ENCODE measurements at regions of chr4 and their contacts with region 1.

Region 1: GRCh38 chr4:48141048-48141447 is 7.0 kb upstream of the TXK start:
- DNase-seq: no peak
- ATAC-seq: peak; percentile 44
- H3K4me3 Mint-ChIP-seq: no peak overlapping the region
- H3K27ac Mint-ChIP-seq: no peak overlapping the region
- H3K4me1 Mint-ChIP-seq: peaks cover 47% of the 10 kb centered on the region
- H3K27me3 Mint-ChIP-seq: no peaks in the 10 kb centered on the region

Region 2: DNA sequence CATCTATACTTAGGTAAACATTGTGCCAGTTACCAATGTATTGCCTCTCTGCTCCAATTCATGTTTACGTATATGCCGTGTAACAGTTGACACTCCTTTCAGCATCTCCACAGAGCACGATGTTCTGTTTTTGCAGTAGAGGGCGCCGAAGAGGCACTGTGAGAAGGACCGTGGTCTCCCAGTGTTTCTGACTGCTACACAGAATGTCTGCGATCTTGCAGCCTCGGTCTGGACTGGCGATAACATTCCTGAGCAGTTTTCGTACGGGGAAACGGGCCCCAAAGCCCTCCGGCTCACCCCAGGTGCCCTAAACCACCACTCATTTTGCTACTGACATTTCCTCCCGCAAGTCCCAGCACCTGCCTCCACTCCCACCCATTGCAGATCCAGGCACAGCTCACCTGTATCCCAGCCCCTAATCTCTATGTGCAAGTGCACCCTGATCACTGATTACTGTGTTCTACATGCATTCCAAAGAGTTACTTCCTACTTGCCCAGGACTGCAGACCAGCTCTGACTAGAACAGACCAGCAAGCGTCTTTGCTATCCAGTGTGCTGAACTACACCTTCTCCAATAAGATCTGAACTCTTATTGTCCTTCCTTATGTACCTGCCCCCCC is 214.3 kb before region 1 on chr4:
- CTCF ChIA-PET with region 1: interaction called, 5 read pairs
- POLR2A ChIA-PET with region 1: no interaction called
- intact Hi-C with region 1: loop called in 1 of 2 experiments (anchors 2 kb)
- DNase-seq: peak; percentile 75
- ATAC-seq: peak; percentile 100
- H3K4me3 Mint-ChIP-seq: peak overlapping the region; percentile 43
- H3K27ac Mint-ChIP-seq: no peak overlapping the region
- H3K4me1 Mint-ChIP-seq: peaks cover 4% of the 10 kb centered on the region
- H3K27me3 Mint-ChIP-seq: peaks cover 19% of the 10 kb centered on the region

Region 3: GRCh38 chr4:48002267-48002666 is 138.8 kb before region 1 on chr4:
- CTCF ChIA-PET with region 1: interaction called, 5 read pairs
- POLR2A ChIA-PET with region 1: no interaction called
- intact Hi-C with region 1: loop called in 1 of 2 experiments (anchors 2 kb)
- DNase-seq: no peak
- ATAC-seq: no peak
- H3K4me3 Mint-ChIP-seq: no peak overlapping the region
- H3K27ac Mint-ChIP-seq: no peak overlapping the region
- H3K4me1 Mint-ChIP-seq: no peaks in the 10 kb centered on the region
- H3K27me3 Mint-ChIP-seq: peaks cover 5% of the 10 kb centered on the region

Region 4: GRCh38 chr4:48109413-48110263 is 31.4 kb before region 1 on chr4:
- CTCF ChIA-PET with region 1: interaction called, 11 read pairs
- POLR2A ChIA-PET with region 1: no interaction called
- intact Hi-C with region 1: loop called (anchors 1 to 5 kb)
- DNase-seq: no peak
- ATAC-seq: peak; percentile 86
- H3K4me3 Mint-ChIP-seq: no peak overlapping the region
- H3K27ac Mint-ChIP-seq: peak overlapping the region; percentile 65
- H3K4me1 Mint-ChIP-seq: peaks cover 61% of the 10 kb centered on the region
- H3K27me3 Mint-ChIP-seq: no peaks in the 10 kb centered on the region

Region 5: GRCh38 chr4:48167538-48168263 is 26.7 kb after region 1 on chr4:
- CTCF ChIA-PET with region 1: no interaction called
- POLR2A ChIA-PET with region 1: no interaction called
- intact Hi-C with region 1: no loop called
- DNase-seq: no peak
- ATAC-seq: peak; percentile 86
- H3K4me3 Mint-ChIP-seq: no peak overlapping the region
- H3K27ac Mint-ChIP-seq: no peak overlapping the region
- H3K4me1 Mint-ChIP-seq: peaks cover 13% of the 10 kb centered on the region
- H3K27me3 Mint-ChIP-seq: no peaks in the 10 kb centered on the region

Region 6: DNA sequence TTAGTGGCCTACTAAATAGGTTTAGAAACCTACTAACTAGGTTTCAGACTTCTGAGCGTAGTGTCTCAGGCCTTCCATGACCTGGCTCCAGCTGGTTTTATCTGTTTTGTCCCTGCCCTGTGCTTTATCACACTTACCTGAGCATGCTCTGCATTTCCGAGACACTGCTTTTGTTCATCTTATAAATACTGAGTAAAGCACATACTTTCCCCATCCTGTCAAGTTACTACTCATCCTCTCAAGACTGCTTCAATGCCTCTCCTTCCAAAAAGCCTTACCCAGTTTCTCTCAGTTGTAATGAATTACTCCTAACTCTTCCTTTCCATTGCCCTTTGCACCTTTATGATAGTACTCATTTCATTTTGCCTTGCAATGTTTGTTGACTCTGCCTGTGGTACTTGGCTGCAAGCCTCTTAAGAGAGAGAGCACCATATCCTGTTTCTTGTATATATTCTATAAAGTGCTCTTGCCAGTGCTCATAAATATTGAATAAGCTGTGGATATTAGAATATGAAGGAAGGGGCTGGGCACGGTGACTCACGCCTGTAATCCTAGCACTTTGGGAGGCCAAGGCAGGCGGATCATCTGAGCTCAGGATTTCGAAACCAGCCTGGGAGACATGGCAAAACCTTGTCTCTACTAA is 234.7 kb after region 1 on chr4:
- CTCF ChIA-PET with region 1: no interaction called
- POLR2A ChIA-PET with region 1: no interaction called
- intact Hi-C with region 1: no loop called
- DNase-seq: no peak
- ATAC-seq: no peak
- H3K4me3 Mint-ChIP-seq: no peak overlapping the region
- H3K27ac Mint-ChIP-seq: no peak overlapping the region
- H3K4me1 Mint-ChIP-seq: peaks cover 7% of the 10 kb centered on the region
- H3K27me3 Mint-ChIP-seq: no peaks in the 10 kb centered on the region

Measured in activated CD4-positive, alpha-beta T cell treated with anti-CD3 and anti-CD28 coated beads for 36 hours (primary cell).